Heart right ventricle (tissue), 16 donors: ENCODE measurements at regions of chr4 and their contacts with region 1.

Region 1: DNA sequence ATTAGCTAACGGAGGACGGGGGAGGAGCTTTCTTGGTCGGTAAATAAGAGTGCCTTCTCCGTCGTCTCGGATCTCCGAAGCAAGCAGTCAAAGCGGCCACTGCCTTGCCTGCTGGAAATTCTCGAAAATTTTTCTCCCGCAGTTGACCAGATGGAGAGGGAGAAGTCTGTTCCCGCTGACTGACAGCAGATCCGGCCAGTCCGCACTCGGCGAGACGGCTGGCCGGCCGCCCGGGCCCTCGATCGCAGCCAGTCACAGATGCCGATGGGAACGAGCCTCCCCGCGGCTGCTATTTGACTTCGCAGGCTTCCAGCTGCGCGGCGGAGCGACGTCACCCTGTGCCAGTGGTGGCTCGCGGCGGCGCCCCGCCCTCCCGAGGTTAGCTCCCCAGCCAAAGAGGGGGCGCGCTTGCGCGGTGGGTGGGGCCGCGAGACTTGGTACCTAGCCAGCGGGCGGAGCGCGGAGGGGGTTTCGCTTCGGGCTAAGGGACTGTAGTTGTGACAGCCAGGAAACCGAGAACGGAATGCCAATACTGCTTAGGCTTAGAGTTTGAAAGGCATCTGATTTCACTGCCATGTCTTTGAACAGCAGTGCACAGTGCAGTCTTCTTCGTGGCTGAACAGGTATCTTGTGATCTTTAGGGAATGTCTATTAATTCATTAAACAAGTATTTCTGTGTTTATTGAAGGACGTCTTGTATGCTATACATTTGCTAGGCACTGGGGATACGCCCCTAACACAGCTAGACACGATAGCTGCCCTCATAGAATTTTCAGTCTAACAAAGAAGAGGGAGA is at the start of gene PPM1K:
- DNase-seq: peak; percentile 99 to 100
- ATAC-seq: peak; percentile 96 to 98 (median 98)
- H3K4me3 ChIP-seq: peak within 1 kb of the TSS; percentile 50 to 91 (median 80)
- H3K27ac ChIP-seq: peak within 1 kb of the TSS; percentile 92 to 98 (median 96)
- H3K4me1 ChIP-seq: peaks cover 0 to 31% (median 20%) of the 10 kb centered on the region in 9 donors
- H3K27me3 ChIP-seq: no peaks in the 10 kb centered on the region
- CTCF ChIP-seq: peak in 6 of 9 donors; percentile 13 to 48 (median 24)
- total RNA-seq, gene PPM1K: 160 to 357 (median 282) TPM

Region 2: GRCh38 chr4:88244816-88245579 is 39.6 kb before region 1 on chr4:
- intact Hi-C with region 1: loop called in 1 of 10 experiments (anchors 5 kb)
- DNase-seq: peak in 1 of 2 donors; percentile 20
- ATAC-seq: peak in 6 of 8 donors; percentile 16 to 60 (median 41)
- H3K4me3 ChIP-seq: peak overlapping the region in 1 of 10 donors; percentile 27
- H3K27ac ChIP-seq: no peak overlapping the region
- H3K4me1 ChIP-seq: peaks cover 0 to 12% (median 0%) of the 10 kb centered on the region in 9 donors
- H3K27me3 ChIP-seq: no peaks in the 10 kb centered on the region
- CTCF ChIP-seq: no peak

Region 3: DNA sequence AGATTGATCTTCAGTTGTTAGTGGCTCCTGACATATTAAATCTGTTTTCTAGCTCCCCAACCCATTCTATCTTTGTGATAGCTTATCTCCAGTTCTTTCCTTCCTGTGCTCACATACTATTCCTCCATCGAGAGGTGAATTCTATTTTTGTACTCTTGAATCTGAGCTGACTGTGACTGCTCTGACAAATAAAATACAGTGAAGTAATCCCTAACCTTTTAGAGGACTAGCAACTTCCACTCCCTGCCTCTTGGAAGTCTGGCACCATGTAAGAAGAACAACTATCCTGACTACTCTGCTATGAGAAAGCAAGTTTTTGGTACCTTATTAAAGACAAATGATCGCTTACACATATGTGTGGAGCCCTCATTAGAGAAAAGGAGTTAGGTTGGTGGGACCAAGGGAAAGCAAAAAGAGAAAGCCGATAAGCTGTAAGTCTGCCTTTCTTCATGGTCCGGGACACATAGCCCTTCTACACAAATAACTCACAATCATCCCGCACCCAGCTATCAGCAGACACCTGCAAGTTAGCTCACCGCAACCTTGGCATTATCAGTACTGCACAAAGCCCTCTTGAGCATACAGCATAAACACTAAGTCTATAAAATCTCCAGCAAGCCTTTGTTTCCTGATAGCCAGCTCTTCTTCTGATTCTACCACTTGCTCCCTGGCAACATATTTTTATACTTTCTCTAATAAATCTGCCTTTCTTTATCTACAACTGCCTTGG is 13.3 kb after region 1 on chr4:
- intact Hi-C with region 1: no loop called
- DNase-seq: no peak
- ATAC-seq: peak; percentile 62 to 92 (median 80)
- H3K4me3 ChIP-seq: peak overlapping the region in 1 of 10 donors; percentile 13
- H3K27ac ChIP-seq: peak overlapping the region; percentile 62 to 98 (median 82)
- H3K4me1 ChIP-seq: peaks cover 0 to 37% (median 2%) of the 10 kb centered on the region in 9 donors
- H3K27me3 ChIP-seq: no peaks in the 10 kb centered on the region
- CTCF ChIP-seq: no peak

Region 4: GRCh38 chr4:88366460-88366859 is 81.8 kb after region 1 on chr4:
- intact Hi-C with region 1: loop called in 1 of 10 experiments (anchors 10 kb)
- DNase-seq: no peak
- ATAC-seq: no peak
- H3K4me3 ChIP-seq: no peak overlapping the region
- H3K27ac ChIP-seq: no peak overlapping the region
- H3K4me1 ChIP-seq: peaks cover 0 to 6% (median 0%) of the 10 kb centered on the region in 9 donors
- H3K27me3 ChIP-seq: no peaks in the 10 kb centered on the region
- CTCF ChIP-seq: no peak

Region 5: GRCh38 chr4:88456757-88457306 is 172.2 kb after region 1 on chr4 and contains the start of gene HERC5:
- intact Hi-C with region 1: loop called in 4 of 10 experiments (anchors 2 to 5 kb)
- DNase-seq: peak; percentile 91 to 97
- ATAC-seq: peak; percentile 95 to 98 (median 97)
- H3K4me3 ChIP-seq: peak within 1 kb of the TSS; percentile 55 to 84 (median 73)
- H3K27ac ChIP-seq: peak within 1 kb of the TSS in 9 of 10 donors; percentile 52 to 87 (median 78)
- H3K4me1 ChIP-seq: peaks cover 0 to 28% (median 12%) of the 10 kb centered on the region in 9 donors
- H3K27me3 ChIP-seq: no peaks in the 10 kb centered on the region
- CTCF ChIP-seq: peak; percentile 32 to 87 (median 66)
- total RNA-seq, gene HERC5: 1.6 to 4.7 (median 2.9) TPM

Region 6: DNA sequence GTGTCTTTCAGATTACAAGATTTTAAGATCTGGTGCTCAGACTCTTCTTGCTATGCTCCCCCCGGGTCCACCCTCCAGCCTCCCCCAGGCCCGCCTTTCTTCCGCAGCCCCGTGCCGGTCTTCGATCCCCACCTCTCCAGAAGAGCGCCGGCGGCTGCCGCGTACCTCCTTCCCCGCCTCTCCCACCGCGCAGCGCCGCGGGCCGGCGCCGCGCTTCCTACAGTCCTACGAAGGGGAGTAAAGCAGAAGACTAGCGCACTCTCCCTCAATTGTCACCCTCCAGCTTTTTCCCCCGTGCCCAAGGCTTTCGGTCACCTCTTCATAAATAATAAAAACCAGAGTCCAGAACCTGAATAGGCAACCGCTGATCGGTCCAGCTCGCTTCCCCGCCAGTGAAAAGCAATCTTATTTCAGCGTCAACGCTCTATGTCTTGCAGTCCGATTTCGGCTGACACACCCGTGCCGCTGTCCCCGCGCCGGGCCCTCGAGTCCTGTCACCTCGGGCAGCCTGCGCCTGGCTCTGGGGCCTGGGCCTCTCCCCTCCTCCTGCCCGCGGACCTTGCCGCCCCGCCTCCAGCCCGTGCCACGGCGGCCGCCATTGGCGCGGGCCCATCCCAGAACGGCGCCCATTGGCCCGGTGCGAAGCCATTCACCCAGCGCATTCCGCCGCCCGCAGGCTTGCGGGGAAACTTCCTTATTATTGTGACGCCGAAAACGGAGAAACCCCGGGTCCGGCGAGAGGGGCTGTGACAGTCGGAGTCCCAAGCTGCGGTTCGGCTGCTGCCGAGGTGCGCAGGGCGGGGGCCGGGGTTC is 307.4 kb after region 1 on chr4 and contains the start of gene HERC3:
- intact Hi-C with region 1: loop called in 1 of 10 experiments (anchors 10 kb)
- DNase-seq: peak; percentile 93 to 94
- ATAC-seq: peak; percentile 97 to 99 (median 98)
- H3K4me3 ChIP-seq: peak within 1 kb of the TSS; percentile 77 to 98 (median 92)
- H3K27ac ChIP-seq: peak within 1 kb of the TSS; percentile 82 to 99 (median 96)
- H3K4me1 ChIP-seq: peaks cover 0 to 40% (median 29%) of the 10 kb centered on the region in 9 donors
- H3K27me3 ChIP-seq: no peaks in the 10 kb centered on the region
- CTCF ChIP-seq: peak in 5 of 9 donors; percentile 11 to 38 (median 25)
- total RNA-seq, gene HERC3: 40.6 to 62.6 (median 47.2) TPM